Activated CD8-positive, alpha-beta memory T cell treated with anti-CD3 and anti-CD28 coated beads, Interleukin-2, amount 10 ng/mL, durations not matched to agents 7 days and 5 days (primary cell): ENCODE measurements at regions of chr6 and their contacts with region 1.

Region 1: GRCh38 chr6:43506667-43507471 is 3.3 kb downstream of the LRRC73 start:
- DNase-seq: peak; percentile 86
- ATAC-seq: peak; percentile 68
- H3K4me3 Mint-ChIP-seq: no peak overlapping the region
- H3K27ac Mint-ChIP-seq: peak overlapping the region; percentile 20
- H3K4me1 Mint-ChIP-seq: peaks cover 17% of the 10 kb centered on the region
- H3K27me3 Mint-ChIP-seq: peaks cover 18% of the 10 kb centered on the region

Region 2: DNA sequence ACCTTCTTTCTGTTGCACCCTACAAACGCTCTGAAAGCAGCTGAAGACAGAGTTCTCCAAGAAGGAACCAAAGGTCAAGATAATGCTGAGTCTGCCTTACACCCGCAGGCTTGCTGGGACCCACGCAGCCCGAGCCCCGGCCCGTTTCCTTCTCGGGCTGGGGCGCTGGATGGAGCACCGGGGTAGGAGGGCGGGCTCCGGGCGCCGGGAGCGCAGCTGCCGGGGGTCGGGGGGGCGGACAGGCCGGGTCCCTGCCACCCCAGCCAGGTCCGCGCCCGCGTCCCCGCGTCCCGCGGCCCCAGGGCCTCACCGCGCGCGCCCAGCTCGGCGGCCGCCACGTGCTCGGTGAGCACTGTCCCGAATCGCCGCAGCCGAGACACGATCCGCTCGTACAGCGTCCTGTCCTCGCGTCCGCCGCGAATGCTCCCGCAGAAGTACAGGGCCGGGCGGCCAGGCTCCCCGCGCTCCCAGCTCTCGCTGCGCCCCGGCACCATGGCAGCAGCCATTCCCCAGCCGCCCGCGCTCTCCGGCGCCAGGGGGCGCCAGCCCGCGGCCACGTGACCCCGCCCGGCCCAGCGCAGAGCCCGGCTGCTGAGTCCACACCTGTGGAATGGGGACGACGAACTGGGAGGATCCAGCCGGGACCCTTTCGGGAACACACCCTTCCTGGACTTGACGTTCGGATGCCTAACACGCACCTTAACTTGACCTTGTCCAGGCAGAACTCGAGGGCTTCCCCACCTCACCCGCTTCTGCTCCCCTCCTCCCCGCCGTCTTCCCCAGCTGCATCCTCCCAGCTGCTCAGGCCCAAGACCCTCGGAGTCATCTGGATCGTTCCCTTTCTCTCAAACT is 277.7 kb before region 1 on chr6 and contains the start of gene DNPH1:
- CTCF ChIA-PET with region 1: interaction called, 14 read pairs
- DNase-seq: peak; percentile 81
- ATAC-seq: peak; percentile 92
- H3K4me3 Mint-ChIP-seq: peak within 1 kb of the TSS; percentile 84
- H3K27ac Mint-ChIP-seq: peak within 1 kb of the TSS; percentile 85
- H3K4me1 Mint-ChIP-seq: peaks cover 43% of the 10 kb centered on the region
- H3K27me3 Mint-ChIP-seq: peaks cover 12% of the 10 kb centered on the region
- total RNA-seq, gene DNPH1: 54.0 to 60.0 TPM

Region 3: DNA sequence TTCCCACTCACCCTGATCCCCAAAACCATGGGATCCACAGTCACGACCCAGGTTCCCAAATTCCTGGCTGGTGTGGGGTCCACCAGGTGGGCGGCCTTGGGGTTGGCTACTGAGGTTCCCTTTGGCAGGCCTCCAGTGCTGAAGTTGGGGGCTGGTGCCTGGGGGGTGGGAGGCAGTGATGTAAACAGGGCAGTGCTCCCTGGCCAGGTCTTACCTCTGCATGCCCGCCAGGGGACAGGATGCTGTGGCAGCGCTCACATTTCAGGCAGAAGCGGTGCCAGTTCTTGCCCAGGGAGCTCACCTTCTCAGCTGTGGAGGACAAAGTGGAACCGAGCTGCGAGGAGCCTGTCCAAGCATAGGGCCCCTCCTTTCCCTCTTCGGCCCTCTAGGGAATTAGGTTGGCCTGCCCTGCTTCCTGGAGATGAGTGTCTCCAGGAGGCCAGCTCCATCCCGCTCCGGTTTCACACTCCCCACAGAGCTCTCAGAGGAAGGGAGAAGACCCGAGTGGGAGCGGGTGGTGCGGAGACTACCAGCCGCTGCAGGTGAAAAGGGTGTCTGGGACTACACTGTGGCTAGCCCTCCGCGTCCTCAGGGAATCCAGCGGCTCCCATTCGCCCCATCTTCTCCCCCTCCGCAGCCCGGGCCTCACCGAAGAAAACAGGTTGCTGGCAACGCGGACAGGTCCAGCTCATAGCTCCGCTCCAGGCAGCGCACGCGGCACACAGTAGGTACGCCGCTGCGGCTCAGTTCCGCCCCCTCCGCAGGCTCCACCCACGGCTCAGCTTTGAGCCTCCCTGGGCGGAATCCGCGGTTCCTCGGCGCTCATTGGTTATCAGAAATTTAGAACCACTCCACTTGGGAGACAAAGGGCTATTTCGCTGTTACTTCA is 198.5 kb before region 1 on chr6 and contains the start of gene CRIP3:
- CTCF ChIA-PET with region 1: interaction called, 14 read pairs
- DNase-seq: peak; percentile 65
- ATAC-seq: peak; percentile 93
- H3K4me3 Mint-ChIP-seq: peak within 1 kb of the TSS; percentile 70
- H3K27ac Mint-ChIP-seq: no peak within 1 kb of the TSS
- H3K4me1 Mint-ChIP-seq: peaks cover 12% of the 10 kb centered on the region
- H3K27me3 Mint-ChIP-seq: peaks cover 13% of the 10 kb centered on the region
- total RNA-seq, gene CRIP3: 0.50 to 0.66 TPM

Region 4: DNA sequence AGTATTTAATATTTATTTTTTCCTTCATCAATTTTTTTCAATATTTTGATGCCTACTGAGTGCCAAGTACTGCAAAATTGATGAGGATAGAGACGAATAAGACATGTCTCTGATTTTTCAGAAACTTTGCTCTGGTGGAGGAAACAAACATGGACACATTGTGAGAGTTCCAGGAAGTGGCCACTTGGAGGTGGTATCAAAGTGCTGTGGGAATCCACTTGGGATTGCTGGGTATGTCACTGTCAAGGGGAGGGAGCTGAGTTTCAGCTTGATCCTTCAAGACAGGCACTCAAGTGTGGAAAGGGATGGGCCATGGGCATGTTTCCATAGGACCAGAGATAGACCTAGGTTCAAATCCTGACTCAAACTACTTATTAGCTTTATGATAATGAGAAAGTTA is 104.0 kb before region 1 on chr6:
- CTCF ChIA-PET with region 1: interaction called, 11 read pairs
- DNase-seq: no peak
- ATAC-seq: no peak
- H3K4me3 Mint-ChIP-seq: no peak overlapping the region
- H3K27ac Mint-ChIP-seq: no peak overlapping the region
- H3K4me1 Mint-ChIP-seq: peaks cover 2% of the 10 kb centered on the region
- H3K27me3 Mint-ChIP-seq: peaks cover 25% of the 10 kb centered on the region

Region 5: DNA sequence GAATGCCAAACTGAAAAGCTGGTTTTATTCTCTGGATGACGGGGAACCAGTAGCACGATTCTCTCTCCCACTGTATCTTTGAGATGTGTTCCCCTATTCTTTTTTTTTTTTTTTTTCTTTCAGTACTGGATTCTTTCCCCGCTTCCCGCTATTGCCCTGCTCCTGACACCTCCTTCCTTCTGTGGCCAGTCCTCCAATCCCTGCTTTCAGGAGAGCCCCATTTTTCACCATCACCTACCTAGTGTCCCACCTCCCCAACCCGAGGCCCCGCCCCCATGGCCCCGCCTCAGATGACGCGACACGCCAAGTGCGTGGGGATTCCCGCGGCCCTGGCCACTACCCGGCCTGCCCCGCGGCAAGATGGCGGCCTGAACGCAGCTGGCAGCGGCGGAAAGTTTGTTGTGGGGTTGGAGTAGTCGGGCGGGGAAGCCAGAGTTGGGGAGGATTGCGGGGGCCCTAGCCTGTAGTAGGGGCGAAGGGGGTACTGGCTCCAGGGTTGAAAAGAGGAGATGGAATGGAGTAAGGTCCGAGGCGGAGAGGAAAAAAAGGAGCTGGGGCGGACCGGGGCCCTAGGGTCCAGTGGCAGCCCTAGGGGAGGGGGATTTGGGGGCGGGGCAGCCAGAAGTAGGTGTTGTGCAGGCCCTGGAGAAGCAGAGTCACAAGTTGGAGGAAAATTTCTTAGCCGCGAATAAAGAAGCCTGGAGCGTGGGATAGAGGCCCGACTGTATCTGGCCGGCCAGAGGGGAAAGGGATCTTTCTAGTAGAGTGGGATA is 29.4 kb before region 1 on chr6 and contains the start of gene TJAP1:
- CTCF ChIA-PET with region 1: interaction called, 20 read pairs
- DNase-seq: peak; percentile 97
- ATAC-seq: peak; percentile 100
- H3K4me3 Mint-ChIP-seq: peak within 1 kb of the TSS; percentile 90
- H3K27ac Mint-ChIP-seq: peak within 1 kb of the TSS; percentile 89
- H3K4me1 Mint-ChIP-seq: peaks cover 45% of the 10 kb centered on the region
- H3K27me3 Mint-ChIP-seq: peaks cover 2% of the 10 kb centered on the region
- total RNA-seq, gene TJAP1: 41.1 to 41.8 TPM

Region 6: GRCh38 chr6:43516697-43517504 is 10.0 kb after region 1 on chr6 and contains the starts of genes POLR1C and YIPF3:
- CTCF ChIA-PET with region 1: interaction called, 34 read pairs
- DNase-seq: peak; percentile 98
- ATAC-seq: peak; percentile 96
- H3K4me3 Mint-ChIP-seq: no peak within 1 kb of the TSS
- H3K27ac Mint-ChIP-seq: no peak within 1 kb of the TSS
- H3K4me1 Mint-ChIP-seq: peaks cover 22% of the 10 kb centered on the region
- H3K27me3 Mint-ChIP-seq: no peaks in the 10 kb centered on the region
- total RNA-seq, gene POLR1C: 30.8 to 48.2 TPM
- total RNA-seq, gene YIPF3: 50.9 to 56.3 TPM